ENCODE measurements at regions of chr1 and their contacts with region 1.

Region 1: DNA sequence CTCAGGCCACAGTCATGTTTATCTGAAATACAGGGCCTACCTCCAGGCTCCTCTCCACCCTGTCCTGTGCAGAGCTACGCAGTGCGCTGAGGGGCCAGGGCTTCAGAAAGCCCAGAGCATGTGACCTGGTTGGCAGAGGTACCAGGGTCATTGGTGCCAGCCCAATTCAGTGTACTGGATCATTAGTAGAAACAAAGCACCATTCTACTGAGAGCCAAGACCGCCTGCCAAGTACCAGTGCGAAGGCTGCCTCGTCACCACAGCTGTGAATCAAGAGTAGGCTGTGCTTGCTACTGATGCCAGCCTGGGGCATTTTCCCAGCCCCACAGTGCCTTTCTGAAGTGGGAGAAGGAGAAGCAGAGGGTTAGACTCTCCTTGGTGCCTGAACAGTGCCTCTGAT is 59.8 kb downstream of the CAPN9 start:
- DNase-seq: peak in 1 of 2 donors; percentile 43
- H3K4me3 ChIP-seq: no peak overlapping the region
- CTCF ChIP-seq: no peak
- POLR2A ChIP-seq: no peak

Region 2: GRCh38 chr1:230972855-230973271 is 165.8 kb after region 1 on chr1:
- intact Hi-C with region 1: no loop called
- DNase-seq: no peak
- H3K4me3 ChIP-seq: no peak overlapping the region
- CTCF ChIP-seq: no peak
- POLR2A ChIP-seq: no peak

Region 3: DNA sequence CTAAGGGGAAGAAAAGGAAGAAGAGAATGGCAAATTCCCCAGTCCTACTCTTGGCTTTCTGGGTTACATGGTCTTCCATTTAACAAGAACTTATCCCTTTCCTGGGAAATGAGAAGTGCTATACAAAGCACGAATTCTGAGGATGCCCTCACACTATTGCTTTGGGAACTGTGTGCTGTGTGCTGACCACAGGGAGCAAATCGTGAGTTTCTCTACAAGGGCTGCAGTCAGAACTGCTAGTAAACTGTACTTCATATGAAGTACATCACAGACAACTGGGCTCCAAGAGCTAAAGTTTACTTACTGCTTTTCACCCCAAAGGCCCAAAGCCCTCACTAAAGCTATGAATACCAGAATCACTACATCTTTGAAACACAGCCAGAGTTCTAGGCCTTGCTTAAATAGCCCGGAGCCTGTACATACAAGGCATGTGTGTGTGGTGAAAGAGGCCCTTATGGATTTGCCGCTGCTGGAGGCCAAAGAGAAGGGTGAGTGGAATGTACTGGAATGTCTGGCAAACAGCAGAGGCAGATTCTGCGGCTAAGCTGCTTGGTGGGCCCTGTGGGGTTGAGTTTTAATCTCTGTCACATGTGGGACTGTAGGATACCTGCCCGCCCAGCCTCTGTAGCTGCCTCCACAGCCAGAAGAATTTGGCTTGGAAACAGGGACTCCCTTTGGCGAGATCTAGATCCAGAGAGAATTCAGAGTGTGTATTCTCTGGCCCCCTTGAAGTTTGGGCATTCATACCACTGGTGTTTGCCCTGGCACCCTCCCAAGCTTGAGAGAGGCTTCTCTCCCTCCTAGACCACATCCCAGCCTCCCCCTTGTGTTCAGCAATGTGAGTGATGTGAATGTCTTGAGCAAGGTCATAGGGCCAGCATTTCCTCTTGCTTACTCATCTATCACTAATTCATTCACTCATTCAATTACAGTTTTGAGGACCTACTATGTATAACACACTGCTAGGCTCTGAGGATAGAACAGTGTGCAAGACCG is 332.9 kb after region 1 on chr1:
- intact Hi-C with region 1: no loop called
- DNase-seq: no peak
- H3K4me3 ChIP-seq: no peak overlapping the region
- CTCF ChIP-seq: no peak
- POLR2A ChIP-seq: no peak

Region 4: GRCh38 chr1:231200388-231201031 is 393.5 kb after region 1 on chr1:
- intact Hi-C with region 1: loop called (anchors 10 kb)
- DNase-seq: no peak
- H3K4me3 ChIP-seq: no peak overlapping the region
- CTCF ChIP-seq: no peak
- POLR2A ChIP-seq: no peak

Measured in lower leg skin (tissue), 4 donors.